Adrenal gland (tissue), 19 donors: ENCODE measurements at regions of chr11 and their contacts with region 1.

Region 1: GRCh38 chr11:36478700-36479329 is 31.3 kb downstream of the TRAF6 start:
- DNase-seq: peak; percentile 36 to 75 (median 52)
- H3K4me3 ChIP-seq: no peak overlapping the region
- H3K27ac ChIP-seq: no peak overlapping the region
- H3K4me1 ChIP-seq: peaks cover 2 to 4% of the 10 kb centered on the region in 2 donors
- H3K27me3 ChIP-seq: no peaks in the 10 kb centered on the region
- CTCF ChIP-seq: peak; percentile 30 to 73 (median 62)
- POLR2A ChIP-seq: no peak

Region 2: DNA sequence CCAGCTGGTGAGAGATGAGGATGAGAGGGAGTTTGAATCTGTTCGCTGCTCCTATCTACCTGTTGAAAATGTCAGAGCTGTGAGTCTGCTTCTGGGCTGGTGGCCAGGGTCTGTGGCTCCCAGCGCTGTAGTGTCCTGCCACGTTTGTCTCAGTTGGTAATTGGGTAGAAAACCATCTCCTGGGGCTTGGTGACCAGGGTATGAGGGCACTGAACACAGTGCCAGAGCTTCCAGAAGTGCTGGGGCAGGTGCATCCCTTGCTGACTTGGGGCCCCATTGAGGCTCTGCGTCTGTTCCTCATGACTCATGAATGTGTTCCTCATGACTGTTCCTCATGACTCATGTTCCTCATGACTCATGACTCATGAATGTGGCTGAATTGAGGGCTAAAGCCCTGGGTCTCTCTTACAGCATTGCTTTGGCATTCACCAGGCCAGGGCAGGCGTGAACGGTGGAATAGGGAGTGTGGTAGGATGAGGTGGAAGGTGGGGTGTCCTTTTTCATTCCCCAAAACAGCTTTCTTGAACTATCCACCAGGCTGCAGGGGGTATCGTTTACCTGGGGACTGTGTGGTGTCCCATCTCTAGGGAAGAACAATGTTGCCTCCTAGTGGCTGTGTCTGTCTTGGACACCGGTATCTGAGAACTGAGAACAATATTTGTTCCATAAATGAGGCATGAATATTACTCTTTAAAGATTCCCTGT is 329.1 kb before region 1 on chr11:
- intact Hi-C with region 1: no loop called
- DNase-seq: peak; percentile 67 to 87 (median 84)
- H3K4me3 ChIP-seq: no peak overlapping the region
- H3K27ac ChIP-seq: peak overlapping the region in 3 of 5 donors; percentile 25 to 76 (median 48)
- H3K4me1 ChIP-seq: peaks cover 10 to 12% of the 10 kb centered on the region in 2 donors
- H3K27me3 ChIP-seq: no peaks in the 10 kb centered on the region
- CTCF ChIP-seq: peak; percentile 27 to 67 (median 51)
- POLR2A ChIP-seq: peak in 1 of 2 donors; percentile 63

Region 3: DNA sequence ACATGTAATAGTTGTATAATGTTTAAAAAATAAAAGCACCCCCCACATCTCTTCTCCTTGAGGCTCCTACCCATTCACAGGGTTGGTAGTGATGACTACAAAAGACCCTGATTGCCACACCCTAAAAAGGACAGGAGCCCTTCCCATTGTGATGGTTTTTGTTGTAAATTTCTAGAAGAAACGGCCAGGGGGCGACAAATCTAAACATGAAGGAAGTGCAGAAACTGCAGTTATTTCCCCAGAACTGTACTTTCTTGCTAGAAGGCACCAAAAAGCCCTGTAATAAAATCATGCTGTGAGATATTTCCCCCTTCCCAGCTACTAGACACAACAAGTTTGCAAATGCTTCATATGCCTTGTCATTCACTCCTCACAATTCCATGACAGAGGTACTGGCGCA is 171.9 kb before region 1 on chr11:
- intact Hi-C with region 1: loop called in 1 of 2 experiments (anchors 5 kb)
- DNase-seq: peak in 3 of 7 donors; percentile 23 to 53 (median 29)
- H3K4me3 ChIP-seq: no peak overlapping the region
- H3K27ac ChIP-seq: no peak overlapping the region
- H3K4me1 ChIP-seq: no peaks in the 10 kb centered on the region
- H3K27me3 ChIP-seq: no peaks in the 10 kb centered on the region
- CTCF ChIP-seq: peak; percentile 30 to 58 (median 40)
- POLR2A ChIP-seq: no peak

Region 4: GRCh38 chr11:36425561-36426081 is 53.2 kb before region 1 on chr11:
- intact Hi-C with region 1: no loop called
- DNase-seq: no peak
- H3K4me3 ChIP-seq: no peak overlapping the region
- H3K27ac ChIP-seq: peak overlapping the region in 1 of 5 donors; percentile 6
- H3K4me1 ChIP-seq: peaks cover 6 to 11% of the 10 kb centered on the region in 2 donors
- H3K27me3 ChIP-seq: no peaks in the 10 kb centered on the region
- CTCF ChIP-seq: no peak
- POLR2A ChIP-seq: no peak

Region 5: DNA sequence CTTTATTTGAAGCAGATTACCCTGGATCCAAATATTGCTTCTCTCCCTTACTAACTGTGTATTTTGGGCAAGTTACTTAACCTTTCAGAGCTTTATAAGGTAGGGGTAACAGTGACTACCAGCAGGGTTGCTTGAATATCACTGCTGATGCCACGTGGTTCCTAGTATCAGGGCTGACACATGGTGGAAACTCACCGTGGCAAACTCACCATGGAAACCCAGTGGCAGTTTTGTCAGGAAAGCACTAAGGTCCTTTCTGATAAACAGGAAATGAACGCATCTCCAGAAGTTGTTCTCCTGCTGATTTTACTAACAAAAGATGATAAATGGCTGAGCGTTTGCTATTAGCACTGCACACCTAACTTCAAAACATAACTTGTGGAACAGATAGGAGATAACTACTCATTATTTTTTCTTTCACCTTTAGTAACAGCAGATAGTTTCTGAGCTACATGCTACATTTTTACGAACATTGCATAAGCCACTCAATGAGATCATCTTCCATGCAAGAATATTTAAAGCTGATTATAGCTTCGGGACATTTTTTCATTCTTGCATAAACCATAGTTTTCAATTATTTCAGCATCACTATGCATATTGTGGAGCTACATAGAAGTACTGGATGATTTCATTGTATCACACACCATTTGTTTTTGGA is 178.9 kb after region 1 on chr11:
- intact Hi-C with region 1: no loop called
- DNase-seq: peak in 1 of 7 donors; percentile 65
- H3K4me3 ChIP-seq: no peak overlapping the region
- H3K27ac ChIP-seq: no peak overlapping the region
- H3K4me1 ChIP-seq: no peaks in the 10 kb centered on the region
- H3K27me3 ChIP-seq: no peaks in the 10 kb centered on the region
- CTCF ChIP-seq: no peak
- POLR2A ChIP-seq: no peak

Region 6: GRCh38 chr11:37124384-37124783 is 645.6 kb after region 1 on chr11:
- intact Hi-C with region 1: no loop called
- DNase-seq: no peak
- H3K4me3 ChIP-seq: no peak overlapping the region
- H3K27ac ChIP-seq: no peak overlapping the region
- H3K4me1 ChIP-seq: no peaks in the 10 kb centered on the region
- H3K27me3 ChIP-seq: no peaks in the 10 kb centered on the region
- CTCF ChIP-seq: no peak
- POLR2A ChIP-seq: no peak